Activated CD4-positive, alpha-beta T cell treated with anti-CD3 and anti-CD28 coated beads, Interleukin-2, amount 10 ng/mL, durations not matched to agents 7 days and 5 days (primary cell): ENCODE measurements at regions of chr2 and their contacts with region 1.

Region 1: DNA sequence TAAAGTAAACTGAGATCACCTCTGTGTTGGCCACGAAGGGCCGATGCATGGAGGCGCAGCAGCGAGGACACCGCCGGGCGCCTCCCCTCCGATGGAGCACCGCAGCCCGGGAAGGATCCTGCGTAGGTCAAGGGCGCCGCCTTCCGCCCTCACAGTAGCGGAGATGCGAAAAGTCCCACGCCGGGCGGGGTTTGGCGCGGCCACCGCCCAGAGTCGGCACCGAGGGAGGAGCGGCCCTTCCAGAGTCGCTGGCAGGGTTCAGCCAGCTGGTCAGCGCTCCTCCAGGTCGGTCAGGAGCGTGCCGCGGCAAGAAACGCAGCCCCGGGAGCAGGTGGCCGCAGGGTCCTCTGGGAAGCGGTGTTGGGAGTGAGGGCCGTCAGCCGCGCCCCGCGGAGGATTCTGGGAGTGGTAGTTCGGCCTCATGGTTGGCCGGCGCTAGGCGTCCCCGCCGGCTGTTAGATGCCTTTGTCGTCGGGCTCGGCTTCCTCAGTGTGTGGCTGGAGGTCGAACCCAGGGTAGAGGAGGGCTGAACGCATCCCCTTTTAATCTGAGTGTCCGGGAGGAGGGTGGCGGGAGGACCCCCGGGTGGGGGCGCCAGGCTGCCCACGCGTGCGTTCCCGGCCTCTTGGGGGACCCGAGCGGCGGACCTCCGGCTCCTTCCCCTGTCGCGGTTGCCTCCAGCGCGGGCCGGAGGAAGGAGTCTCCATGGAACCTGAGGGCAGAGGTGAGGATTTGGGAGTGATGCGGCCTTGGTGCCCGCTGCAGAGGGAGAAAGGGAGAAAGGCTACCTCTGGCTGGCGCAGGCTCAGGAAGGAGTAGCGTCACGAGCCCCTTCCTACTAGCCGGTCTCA is at the start of gene ZNF892:
- DNase-seq: peak; percentile 80
- H3K4me3 Mint-ChIP-seq: peak within 1 kb of the TSS; percentile 85
- H3K27ac Mint-ChIP-seq: peak within 1 kb of the TSS; percentile 80
- H3K4me1 Mint-ChIP-seq: peaks cover 18% of the 10 kb centered on the region
- H3K27me3 Mint-ChIP-seq: no peaks in the 10 kb centered on the region
- total RNA-seq, gene ZNF892: 3.6 to 4.0 TPM

Region 2: GRCh38 chr2:95225658-95226057 is 18.3 kb after region 1 on chr2:
- CTCF ChIA-PET with region 1: interaction called, 10 read pairs
- POLR2A ChIA-PET with region 1: no interaction called
- DNase-seq: no peak
- H3K4me3 Mint-ChIP-seq: no peak overlapping the region
- H3K27ac Mint-ChIP-seq: no peak overlapping the region
- H3K4me1 Mint-ChIP-seq: no peaks in the 10 kb centered on the region
- H3K27me3 Mint-ChIP-seq: no peaks in the 10 kb centered on the region